Dorsolateral prefrontal cortex (tissue), 120 donors: ENCODE measurements at regions of chr1 and their contacts with region 1.

Region 1: DNA sequence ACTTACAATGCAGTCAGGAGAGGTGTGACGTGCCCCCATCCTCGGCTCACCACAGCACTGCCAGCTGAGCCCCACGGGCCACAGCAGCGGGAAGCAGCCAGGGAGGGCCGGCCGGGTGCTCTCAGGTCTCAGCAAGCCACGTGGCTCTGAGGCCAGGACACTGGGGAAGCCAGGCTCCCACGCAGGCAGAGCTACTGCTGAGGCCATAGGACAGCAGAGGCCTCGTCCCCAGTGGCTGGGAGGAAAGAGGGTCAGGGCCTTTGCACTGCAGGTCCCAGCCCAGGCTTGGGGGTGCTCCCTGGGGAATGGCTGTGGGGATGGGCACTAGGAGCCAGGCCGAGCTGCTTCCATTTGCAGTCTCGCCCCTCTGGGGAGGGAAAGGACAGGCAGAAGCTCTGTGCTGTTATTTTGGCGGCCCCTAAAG is 5.8 kb downstream of the LRRC47 start:
- DNase-seq: no peak
- H3K4me3 ChIP-seq: no peak overlapping the region
- H3K27ac ChIP-seq: no peak overlapping the region
- H3K27me3 ChIP-seq: no peaks in the 10 kb centered on the region
- CTCF ChIP-seq: no peak

Region 2: GRCh38 chr1:3732434-3733093 is 57.9 kb before region 1 on chr1:
- intact Hi-C with region 1: loop called in 1 of 2 experiments (anchors 5 kb)
- DNase-seq: no peak
- H3K4me3 ChIP-seq: no peak overlapping the region
- H3K27ac ChIP-seq: peak overlapping the region in 2 of 59 donors; percentile 38 to 58
- H3K27me3 ChIP-seq: peaks cover 0 to 13% (median 0%) of the 10 kb centered on the region in 45 donors
- CTCF ChIP-seq: no peak

Region 3: GRCh38 chr1:3746830-3747521 is 43.5 kb before region 1 on chr1:
- intact Hi-C with region 1: loop called in 1 of 2 experiments (anchors 5 kb)
- DNase-seq: peak; percentile 88 to 94 (median 90)
- H3K4me3 ChIP-seq: peak overlapping the region; percentile 50 to 84 (median 75)
- H3K27ac ChIP-seq: peak overlapping the region in 56 of 59 donors; percentile 2 to 88 (median 76)
- H3K27me3 ChIP-seq: no peaks in the 10 kb centered on the region
- CTCF ChIP-seq: peak in 2 of 56 donors; percentile 10 to 20

Region 4: GRCh38 chr1:3942818-3943431 is 152.4 kb after region 1 on chr1:
- intact Hi-C with region 1: no loop called
- DNase-seq: no peak
- H3K4me3 ChIP-seq: no peak overlapping the region
- H3K27ac ChIP-seq: no peak overlapping the region
- H3K27me3 ChIP-seq: peaks cover 0 to 25% (median 0%) of the 10 kb centered on the region in 45 donors
- CTCF ChIP-seq: no peak